ENCODE measurements at regions of chr22 and their contacts with region 1.

Region 1: DNA sequence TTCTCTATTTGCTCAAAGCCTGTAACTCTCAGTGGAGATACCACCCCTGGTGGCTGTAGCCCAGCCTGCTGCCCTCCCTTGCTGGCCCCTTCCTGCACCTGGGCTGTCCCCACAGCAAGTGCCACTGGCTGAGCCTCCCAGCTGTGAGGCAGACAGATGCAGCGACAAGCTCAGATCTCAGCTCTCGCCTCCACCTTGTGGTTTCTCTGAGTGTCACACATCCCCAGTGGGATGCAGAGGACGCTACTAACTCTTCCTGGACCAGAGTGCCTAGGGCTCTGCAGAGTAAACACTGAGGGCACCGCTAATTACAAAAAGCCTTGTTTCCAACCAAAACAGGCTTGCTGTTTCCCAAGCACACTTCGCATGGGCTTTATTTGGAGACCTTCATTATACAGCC is 8.9 kb downstream of the YPEL1 start:
- DNase-seq: no peak
- H3K4me3 ChIP-seq: no peak overlapping the region
- H3K27ac ChIP-seq: no peak overlapping the region
- H3K4me1 ChIP-seq: no peaks in the 10 kb centered on the region
- H3K27me3 ChIP-seq: no peaks in the 10 kb centered on the region
- CTCF ChIP-seq: peak in 1 of 2 donors; percentile 13

Region 2: DNA sequence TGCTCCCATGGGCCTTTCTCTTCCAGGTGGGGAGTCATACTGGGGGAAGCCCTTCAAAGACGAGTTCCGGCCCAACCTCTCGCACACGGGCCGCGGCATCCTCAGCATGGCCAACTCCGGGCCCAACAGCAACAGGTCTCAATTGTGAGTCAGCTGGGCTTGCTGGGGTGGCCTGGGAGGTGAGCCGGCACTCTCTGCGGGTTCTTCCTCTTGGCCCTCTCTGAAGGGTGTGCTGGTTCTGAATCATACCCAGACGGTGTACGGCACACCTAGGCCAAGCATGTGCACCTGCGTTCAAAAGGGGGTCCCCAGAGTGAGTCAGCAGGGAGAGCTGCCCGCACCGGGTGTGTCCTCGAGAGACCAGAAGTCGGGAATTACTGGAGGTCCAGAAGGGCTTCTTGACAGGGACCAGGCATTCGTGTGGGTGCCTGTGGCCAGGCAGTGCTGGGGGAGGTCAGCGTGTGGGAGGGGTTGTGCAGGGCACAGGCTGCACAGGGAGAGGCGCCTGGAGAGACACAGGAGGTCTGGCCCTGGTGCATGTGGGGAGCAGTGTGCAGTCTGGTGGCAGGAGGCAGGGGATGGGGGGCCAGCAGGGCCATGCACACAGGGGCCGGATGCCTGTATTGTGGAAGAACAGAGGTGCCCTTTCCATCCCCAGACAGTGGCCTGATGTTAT is 37.8 kb before region 1 on chr22:
- CTCF ChIA-PET with region 1: no interaction called
- dilution Hi-C with region 1: loop called (anchors 5 kb)
- in situ Hi-C with region 1: no loop called
- intact Hi-C with region 1: no loop called
- DNase-seq: peak; percentile 3
- H3K4me3 ChIP-seq: no peak overlapping the region
- H3K27ac ChIP-seq: no peak overlapping the region
- H3K4me1 ChIP-seq: no peaks in the 10 kb centered on the region
- H3K27me3 ChIP-seq: no peaks in the 10 kb centered on the region
- CTCF ChIP-seq: no peak

Region 3: GRCh38 chr22:21771631-21771976 is 45.0 kb after region 1 on chr22:
- CTCF ChIA-PET with region 1: no interaction called
- dilution Hi-C with region 1: loop called (anchors 5 kb)
- in situ Hi-C with region 1: no loop called
- intact Hi-C with region 1: no loop called
- DNase-seq: no peak
- H3K4me3 ChIP-seq: no peak overlapping the region
- H3K27ac ChIP-seq: no peak overlapping the region
- H3K4me1 ChIP-seq: no peaks in the 10 kb centered on the region
- H3K27me3 ChIP-seq: no peaks in the 10 kb centered on the region
- CTCF ChIP-seq: no peak

Region 4: DNA sequence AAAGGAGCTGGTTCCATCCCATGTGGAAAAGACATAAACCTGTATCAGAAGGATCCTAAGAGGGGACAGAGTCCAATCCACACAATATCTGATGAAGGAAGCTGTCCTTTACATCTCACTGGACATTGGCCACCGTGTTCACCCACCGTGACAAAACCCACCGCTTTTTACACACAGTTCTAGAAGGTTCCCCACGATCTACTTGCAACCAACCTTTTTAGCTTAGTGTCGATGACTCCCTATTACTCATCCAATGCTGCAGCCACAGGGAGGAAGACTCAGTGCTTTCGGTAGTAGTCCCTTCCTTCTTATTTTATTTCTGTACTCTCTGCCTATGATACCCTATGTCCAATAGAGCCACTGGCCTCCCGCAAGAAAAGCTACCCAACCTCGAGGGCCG is 75.4 kb after region 1 on chr22:
- CTCF ChIA-PET with region 1: no interaction called
- dilution Hi-C with region 1: loop called (anchors 5 kb)
- in situ Hi-C with region 1: no loop called
- intact Hi-C with region 1: no loop called
- DNase-seq: peak; percentile 5
- H3K4me3 ChIP-seq: no peak overlapping the region
- H3K27ac ChIP-seq: no peak overlapping the region
- H3K4me1 ChIP-seq: no peaks in the 10 kb centered on the region
- H3K27me3 ChIP-seq: no peaks in the 10 kb centered on the region
- CTCF ChIP-seq: no peak